ENCODE measurements at regions of chr2 and their contacts with region 1.

Region 1: GRCh38 chr2:155010925-155011324 is 312.4 kb downstream of the KCNJ3 start:
- DNase-seq: no peak
- ATAC-seq: no peak
- H3K4me3 ChIP-seq: no peak overlapping the region
- H3K27ac ChIP-seq: no peak overlapping the region
- H3K4me1 ChIP-seq: no peaks in the 10 kb centered on the region
- H3K27me3 ChIP-seq: no peaks in the 10 kb centered on the region
- CTCF ChIP-seq: no peak
- POLR2A ChIP-seq: no peak

Region 2: DNA sequence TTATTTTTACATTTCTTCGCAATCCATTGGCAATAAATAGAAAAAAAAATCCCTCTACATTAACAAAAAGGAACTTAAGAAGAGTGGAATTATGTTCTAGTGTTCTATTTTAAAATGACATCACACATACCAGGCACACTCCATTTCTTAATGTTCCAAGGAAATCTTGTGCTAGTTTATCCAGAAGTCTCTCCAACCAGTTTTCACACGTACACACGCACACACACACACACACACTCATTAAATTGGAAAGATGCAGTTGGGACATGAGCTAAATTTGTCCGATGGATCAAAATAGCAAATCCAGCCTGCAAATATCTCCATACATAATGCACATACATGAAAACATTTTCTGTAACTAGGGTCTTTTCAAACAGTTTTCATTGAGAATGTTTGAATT is 234.1 kb before region 1 on chr2:
- intact Hi-C with region 1: loop called in 1 of 10 experiments (anchors 5 kb)
- DNase-seq: no peak
- ATAC-seq: no peak
- H3K4me3 ChIP-seq: no peak overlapping the region
- H3K27ac ChIP-seq: no peak overlapping the region
- H3K4me1 ChIP-seq: no peaks in the 10 kb centered on the region
- H3K27me3 ChIP-seq: no peaks in the 10 kb centered on the region
- CTCF ChIP-seq: no peak
- POLR2A ChIP-seq: no peak

Region 3: GRCh38 chr2:154974041-154974440 is 36.9 kb before region 1 on chr2:
- intact Hi-C with region 1: no loop called
- DNase-seq: no peak
- ATAC-seq: no peak
- H3K4me3 ChIP-seq: no peak overlapping the region
- H3K27ac ChIP-seq: no peak overlapping the region
- H3K4me1 ChIP-seq: no peaks in the 10 kb centered on the region
- H3K27me3 ChIP-seq: no peaks in the 10 kb centered on the region
- CTCF ChIP-seq: no peak
- POLR2A ChIP-seq: no peak

Region 4: DNA sequence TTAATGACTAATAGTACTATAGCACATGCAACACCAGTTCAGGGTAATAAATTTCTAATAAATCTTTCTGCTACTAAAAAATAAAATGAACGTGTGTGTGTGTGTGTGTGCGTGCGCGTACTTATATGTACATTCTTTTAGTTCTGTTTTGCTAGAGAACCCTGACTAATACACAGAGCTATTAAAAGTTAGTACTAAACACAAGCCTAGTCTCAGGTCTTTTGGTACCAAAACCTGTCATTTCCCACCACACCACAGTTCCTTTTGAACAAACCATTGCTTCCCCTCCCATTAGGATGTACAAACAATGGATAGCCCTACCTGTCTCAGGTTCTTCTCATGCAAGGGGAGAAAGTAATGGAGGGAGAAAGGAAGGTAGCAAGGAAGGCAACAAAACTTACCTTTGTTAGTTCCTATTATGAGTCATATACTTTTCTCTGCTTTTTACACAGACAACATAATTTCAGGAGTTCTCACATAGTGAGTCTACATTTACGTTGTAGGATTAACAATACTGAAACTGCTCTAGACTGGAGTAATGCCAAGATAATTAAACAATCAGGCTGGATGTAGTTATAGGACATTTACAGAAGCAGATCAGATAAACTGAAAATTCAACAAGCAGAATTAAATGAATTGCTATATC is 114.8 kb after region 1 on chr2:
- intact Hi-C with region 1: no loop called
- DNase-seq: no peak
- ATAC-seq: no peak
- H3K4me3 ChIP-seq: no peak overlapping the region
- H3K27ac ChIP-seq: no peak overlapping the region
- H3K4me1 ChIP-seq: no peaks in the 10 kb centered on the region
- H3K27me3 ChIP-seq: no peaks in the 10 kb centered on the region
- CTCF ChIP-seq: no peak
- POLR2A ChIP-seq: no peak

Region 5: GRCh38 chr2:155294354-155294753 is 283.4 kb after region 1 on chr2:
- intact Hi-C with region 1: no loop called
- DNase-seq: no peak
- ATAC-seq: no peak
- H3K4me3 ChIP-seq: no peak overlapping the region
- H3K27ac ChIP-seq: no peak overlapping the region
- H3K4me1 ChIP-seq: no peaks in the 10 kb centered on the region
- H3K27me3 ChIP-seq: no peaks in the 10 kb centered on the region
- CTCF ChIP-seq: no peak
- POLR2A ChIP-seq: no peak